ENCODE measurements at regions of chr2 and their contacts with region 1.

Region 1: DNA sequence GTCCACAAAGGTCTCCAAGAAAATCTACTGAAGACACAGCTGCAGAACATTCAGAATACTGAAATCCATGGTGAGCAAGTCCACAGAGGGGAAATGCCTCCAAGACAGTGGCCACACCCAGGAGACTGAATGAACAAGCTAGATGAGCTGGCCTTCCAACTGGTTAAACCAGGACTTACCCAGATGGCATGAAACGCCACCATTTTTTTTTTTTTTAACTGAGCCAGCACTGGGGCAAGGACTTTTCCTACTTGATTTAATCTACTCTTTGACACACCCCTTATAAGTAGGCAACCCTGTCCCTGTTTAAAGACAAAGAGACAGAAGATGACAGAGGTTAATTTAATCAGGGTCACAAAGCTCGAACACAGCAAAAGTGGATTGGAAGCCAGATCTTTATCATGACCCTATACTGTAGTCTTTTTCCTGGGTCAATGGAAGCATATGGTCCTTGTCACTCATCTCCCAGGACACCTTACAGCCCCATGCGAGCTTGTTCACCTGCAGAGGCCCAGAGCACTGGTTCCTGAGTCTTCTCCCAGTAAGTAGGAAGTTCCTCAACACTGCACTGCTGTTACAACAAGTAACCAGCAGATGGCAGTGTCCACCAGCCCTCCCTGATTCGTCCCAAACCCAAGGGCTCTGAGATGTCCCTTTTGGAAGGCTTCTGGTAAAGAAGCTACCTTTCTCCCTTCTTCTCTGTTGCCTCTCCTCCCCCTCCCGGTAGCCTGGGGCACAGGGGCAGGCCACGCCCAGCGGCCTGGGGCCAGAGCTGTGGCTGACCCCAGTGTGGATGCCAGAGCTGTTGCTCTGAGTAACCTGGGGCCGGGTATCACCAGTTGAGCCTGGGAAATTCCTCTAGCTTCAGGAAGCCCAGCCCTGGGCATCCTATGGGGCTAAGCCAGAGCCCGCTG is 5.6 kb upstream of the GDF7 start:
- DNase-seq: peak; percentile 83 to 86
- ATAC-seq: peak; percentile 57 to 79
- H3K4me3 ChIP-seq: no peak overlapping the region
- H3K27ac ChIP-seq: no peak overlapping the region
- H3K4me1 ChIP-seq: peaks cover 13% of the 10 kb centered on the region; the same call in 2 of the 3 replicates
- CTCF ChIP-seq: peak; percentile 97
- EP300 ChIP-seq: no peak
- POLR2A ChIP-seq: no peak
- RAD21 ChIP-seq: peak; percentile 97 to 99

Region 2: DNA sequence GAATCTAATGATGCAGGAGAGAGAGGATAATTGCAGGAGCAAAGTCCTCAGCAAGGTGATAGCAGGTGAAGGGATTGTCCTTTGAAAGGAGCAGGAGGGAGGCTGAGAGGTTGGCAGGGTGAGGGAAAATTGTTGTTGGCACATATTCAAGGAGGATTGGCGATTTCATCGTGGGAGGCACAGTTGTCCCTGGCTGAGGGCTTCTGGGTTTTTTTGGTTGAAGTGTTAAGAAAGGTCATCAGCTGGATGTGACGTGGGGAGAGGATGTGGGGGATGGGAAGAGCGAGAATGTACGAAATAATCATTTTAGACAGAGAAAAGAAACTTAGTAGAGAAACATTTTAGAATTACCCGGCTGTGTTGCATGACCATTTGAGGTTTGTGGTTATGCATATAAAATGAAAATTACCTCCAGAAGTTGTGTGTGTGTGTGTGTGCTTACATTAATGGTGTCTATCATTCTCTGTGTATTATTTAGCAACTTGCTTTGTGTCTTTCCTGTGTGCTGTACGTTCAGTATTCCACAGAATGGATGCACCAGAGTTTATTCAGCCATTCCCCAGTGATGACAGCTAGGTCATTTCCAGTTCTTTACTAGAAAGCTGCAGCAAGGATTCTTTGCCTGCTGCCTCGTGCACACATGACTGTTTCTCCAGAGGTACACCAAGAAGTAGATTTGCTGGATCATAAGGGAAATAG is 504.0 kb before region 1 on chr2:
- CTCF ChIA-PET with region 1: no interaction called
- POLR2A ChIA-PET with region 1: no interaction called
- DNase-seq: no peak
- ATAC-seq: no peak
- H3K4me3 ChIP-seq: no peak overlapping the region
- H3K27ac ChIP-seq: no peak overlapping the region
- H3K4me1 ChIP-seq: peaks cover 4% of the 10 kb centered on the region; the same call in 1 of the 3 replicates
- CTCF ChIP-seq: no peak
- EP300 ChIP-seq: no peak
- POLR2A ChIP-seq: no peak
- RAD21 ChIP-seq: no peak

Region 3: DNA sequence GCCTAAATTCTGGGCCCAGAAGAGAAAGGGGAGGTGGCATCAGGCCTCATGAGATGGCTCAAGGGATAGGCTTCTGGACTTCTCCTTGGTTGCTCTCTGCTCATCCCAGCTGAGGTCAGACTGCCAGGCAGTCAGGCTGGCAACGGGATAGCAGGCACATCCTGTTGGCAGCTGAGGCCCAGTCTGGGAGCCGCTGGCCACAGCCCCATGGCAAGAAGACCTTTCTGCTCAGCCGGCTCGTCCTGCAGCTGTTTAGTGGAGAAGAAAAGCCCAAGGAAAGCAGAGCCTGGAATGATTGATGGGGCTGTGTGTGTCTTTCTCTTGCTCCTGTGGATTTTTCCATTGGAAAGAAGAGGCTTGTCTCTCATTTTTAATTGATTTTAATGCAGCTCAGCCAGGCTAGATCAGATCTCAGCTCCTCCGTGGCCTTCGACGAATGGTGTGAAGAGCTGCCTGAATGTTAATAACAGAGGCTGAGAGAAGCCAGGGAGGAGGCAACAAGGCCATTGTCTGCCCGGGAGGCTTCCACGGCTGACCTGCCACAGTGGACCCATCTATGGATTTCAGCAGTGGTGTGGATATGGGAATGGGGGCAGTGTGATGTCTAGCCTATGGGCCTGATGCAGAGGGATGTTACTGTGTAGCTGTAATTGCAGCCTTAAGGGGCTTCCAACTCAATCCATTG is 109.9 kb before region 1 on chr2:
- CTCF ChIA-PET with region 1: no interaction called
- POLR2A ChIA-PET with region 1: no interaction called
- DNase-seq: no peak
- ATAC-seq: peak in 1 of 2 experiments; percentile 61; a peak in 3 of 6 replicates
- H3K4me3 ChIP-seq: no peak overlapping the region
- H3K27ac ChIP-seq: no peak overlapping the region
- H3K4me1 ChIP-seq: no peaks in the 10 kb centered on the region
- CTCF ChIP-seq: no peak
- EP300 ChIP-seq: no peak
- POLR2A ChIP-seq: no peak
- RAD21 ChIP-seq: no peak

Region 4: GRCh38 chr2:20642055-20642971 is 19.0 kb before region 1 on chr2:
- CTCF ChIA-PET with region 1: interaction called, 171 read pairs
- POLR2A ChIA-PET with region 1: no interaction called
- DNase-seq: peak; percentile 69 to 95
- ATAC-seq: peak; percentile 89 to 99
- H3K4me3 ChIP-seq: no peak overlapping the region
- H3K27ac ChIP-seq: peak overlapping the region in 1 of 2 experiments; percentile 49; a peak in 4 of 6 replicates
- H3K4me1 ChIP-seq: peaks cover 11% of the 10 kb centered on the region; the same call in 2 of the 3 replicates
- CTCF ChIP-seq: peak; percentile 96
- EP300 ChIP-seq: no peak
- POLR2A ChIP-seq: no peak
- RAD21 ChIP-seq: peak; percentile 96

Region 5: DNA sequence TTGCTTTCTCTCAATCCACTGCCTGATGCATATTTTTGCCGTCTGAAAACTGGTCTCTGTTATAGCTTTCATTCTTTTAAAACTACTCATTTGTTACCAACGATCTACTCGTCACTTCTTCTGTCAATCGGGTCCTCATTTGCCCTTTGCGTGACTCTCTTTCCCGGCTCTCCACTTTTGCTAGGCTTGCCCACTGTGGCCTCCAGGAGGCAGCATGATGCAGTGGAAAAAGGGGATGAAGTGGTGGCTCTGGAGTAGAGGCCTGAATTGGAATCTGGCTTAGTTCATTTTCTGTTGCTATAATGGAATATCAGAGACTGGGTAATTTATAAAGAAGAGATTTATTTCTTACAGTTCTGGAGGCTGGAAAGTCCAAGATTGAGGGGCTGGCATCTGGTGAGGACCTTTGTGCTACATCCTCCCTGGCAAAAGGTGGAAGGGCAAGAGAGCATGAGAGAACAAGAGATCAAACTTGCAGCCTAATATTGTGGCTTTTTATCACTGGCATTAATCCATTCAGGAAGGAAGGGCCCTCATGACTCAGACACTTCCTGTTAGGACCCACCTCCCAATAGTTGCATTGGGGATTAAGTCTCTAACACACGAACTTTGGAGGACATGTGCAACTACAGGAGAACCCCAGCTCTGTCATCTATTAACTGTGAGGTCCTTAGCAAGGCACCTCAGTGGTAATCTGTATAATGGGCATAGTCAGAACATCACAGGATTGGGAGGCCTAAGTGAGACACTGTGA is 21.0 kb after region 1 on chr2:
- CTCF ChIA-PET with region 1: interaction called, 191 read pairs
- POLR2A ChIA-PET with region 1: no interaction called
- DNase-seq: no peak
- ATAC-seq: peak in 1 of 2 experiments; percentile 77; a peak in 3 of 6 replicates
- H3K4me3 ChIP-seq: no peak overlapping the region
- H3K27ac ChIP-seq: no peak overlapping the region
- H3K4me1 ChIP-seq: no peaks in the 10 kb centered on the region
- CTCF ChIP-seq: peak; percentile 54
- EP300 ChIP-seq: no peak
- POLR2A ChIP-seq: no peak
- RAD21 ChIP-seq: peak; percentile 61 to 76

Region 6: DNA sequence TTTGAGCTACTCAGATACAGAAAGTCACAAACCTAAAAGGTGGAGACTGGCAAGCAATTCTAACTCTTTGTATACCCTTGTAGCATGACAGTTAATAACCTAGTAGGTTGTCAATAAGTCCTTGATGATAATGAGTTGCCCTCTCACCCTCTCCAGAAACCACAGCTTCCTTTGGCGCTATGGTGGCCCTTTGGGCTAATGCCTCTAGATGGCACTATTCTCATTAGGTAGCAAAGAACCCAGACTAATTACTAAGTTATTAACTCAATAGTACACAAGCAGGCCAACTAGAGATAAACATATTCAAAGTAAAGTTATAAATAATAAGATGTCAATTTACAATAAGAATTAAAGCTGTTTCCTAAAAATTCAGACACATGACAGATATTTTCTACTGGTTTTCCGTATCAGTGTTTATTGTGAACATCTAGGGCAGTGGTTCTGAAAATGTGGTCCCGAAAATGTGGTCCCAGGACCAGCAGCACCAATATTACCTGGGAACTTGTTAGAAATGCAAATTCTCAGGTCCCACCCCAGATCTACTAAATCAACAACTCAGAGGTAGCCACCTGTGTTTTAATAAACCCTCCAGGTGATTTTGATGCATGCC is 120.4 kb after region 1 on chr2:
- CTCF ChIA-PET with region 1: interaction called, 13 read pairs
- POLR2A ChIA-PET with region 1: no interaction called
- DNase-seq: peak; percentile 21
- ATAC-seq: peak; percentile 64 to 84; a peak in 4 of 6 replicates
- H3K4me3 ChIP-seq: no peak overlapping the region
- H3K27ac ChIP-seq: no peak overlapping the region
- H3K4me1 ChIP-seq: no peaks in the 10 kb centered on the region
- CTCF ChIP-seq: peak; percentile 79
- EP300 ChIP-seq: no peak
- POLR2A ChIP-seq: no peak
- RAD21 ChIP-seq: peak; percentile 63 to 73

Region 7: GRCh38 chr2:20953145-20953824 is 292.0 kb after region 1 on chr2:
- CTCF ChIA-PET with region 1: interaction called, 352 read pairs
- POLR2A ChIA-PET with region 1: no interaction called
- DNase-seq: no peak
- ATAC-seq: no peak; a peak in 1 of 6 replicates
- H3K4me3 ChIP-seq: no peak overlapping the region
- H3K27ac ChIP-seq: no peak overlapping the region
- H3K4me1 ChIP-seq: no peaks in the 10 kb centered on the region
- CTCF ChIP-seq: no peak
- EP300 ChIP-seq: no peak
- POLR2A ChIP-seq: no peak
- RAD21 ChIP-seq: no peak

Region 8: GRCh38 chr2:21010813-21011439 is 349.6 kb after region 1 on chr2:
- CTCF ChIA-PET with region 1: interaction called, 15 read pairs
- POLR2A ChIA-PET with region 1: no interaction called
- DNase-seq: no peak
- ATAC-seq: no peak
- H3K4me3 ChIP-seq: no peak overlapping the region
- H3K27ac ChIP-seq: no peak overlapping the region
- H3K4me1 ChIP-seq: no peaks in the 10 kb centered on the region
- CTCF ChIP-seq: no peak
- EP300 ChIP-seq: no peak
- POLR2A ChIP-seq: no peak
- RAD21 ChIP-seq: no peak

Region 9: GRCh38 chr2:21118302-21118920 is 457.1 kb after region 1 on chr2:
- CTCF ChIA-PET with region 1: interaction called, 44 read pairs
- POLR2A ChIA-PET with region 1: no interaction called
- DNase-seq: peak; percentile 18 to 46
- ATAC-seq: peak; percentile 91 to 92; a peak in 5 of 6 replicates
- H3K4me3 ChIP-seq: no peak overlapping the region
- H3K27ac ChIP-seq: no peak overlapping the region
- H3K4me1 ChIP-seq: no peaks in the 10 kb centered on the region
- CTCF ChIP-seq: peak; percentile 59
- EP300 ChIP-seq: no peak
- POLR2A ChIP-seq: no peak
- RAD21 ChIP-seq: peak; percentile 64 to 73

Measured in A549 (cell line).